ENCODE measurements at regions of chr6 and their contacts with region 1.

Region 1: DNA sequence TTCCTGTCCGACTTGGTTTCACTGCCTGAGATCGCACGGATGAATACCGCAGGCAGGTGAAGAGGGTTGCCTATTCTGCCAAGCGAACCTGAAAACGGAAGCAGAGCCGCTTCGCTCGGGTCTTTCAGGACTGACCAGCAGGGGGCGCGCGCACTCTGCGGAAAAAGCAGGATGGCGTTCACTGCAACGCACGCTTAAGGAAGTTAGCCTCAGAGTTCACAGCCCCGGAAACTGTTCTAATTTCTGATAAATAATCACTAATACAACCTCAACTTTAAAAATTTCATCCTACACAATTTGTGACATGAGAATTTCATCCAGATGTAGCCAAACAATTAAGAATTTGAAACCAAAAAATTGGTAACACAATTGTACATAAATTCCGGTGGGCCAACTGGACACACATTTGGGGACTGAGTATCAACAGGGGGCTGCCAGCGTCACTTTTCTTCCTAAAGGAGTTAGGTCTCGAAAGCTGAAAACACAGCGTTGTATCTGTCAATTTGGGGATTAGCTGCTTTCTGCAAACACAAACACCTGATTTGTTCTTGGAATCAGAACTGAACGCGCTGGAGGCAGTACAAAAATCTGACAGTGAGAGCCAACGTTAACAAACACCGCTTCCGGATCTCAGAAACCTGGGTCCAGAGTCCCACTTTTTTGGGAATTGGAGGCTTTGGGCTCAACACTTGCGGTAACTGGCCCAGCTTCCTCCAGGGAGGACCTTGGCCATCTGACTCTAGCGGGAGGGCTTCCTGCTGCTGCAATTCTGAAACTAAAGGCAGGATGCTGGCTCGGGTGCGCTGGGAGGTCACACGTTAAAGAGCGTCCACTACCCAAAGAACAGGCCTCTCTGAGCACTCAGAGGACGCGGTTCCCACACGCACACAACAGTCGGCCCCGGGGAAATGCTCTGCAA is 8.8 kb downstream of the PXDC1 start:
- DNase-seq: peak; percentile 90
- ATAC-seq: peak; percentile 93
- H3K4me3 Mint-ChIP-seq: no peak overlapping the region
- H3K27ac Mint-ChIP-seq: peak overlapping the region; percentile 57
- H3K4me1 Mint-ChIP-seq: peaks cover 13% of the 10 kb centered on the region
- H3K27me3 Mint-ChIP-seq: peaks cover 8% of the 10 kb centered on the region

Region 2: DNA sequence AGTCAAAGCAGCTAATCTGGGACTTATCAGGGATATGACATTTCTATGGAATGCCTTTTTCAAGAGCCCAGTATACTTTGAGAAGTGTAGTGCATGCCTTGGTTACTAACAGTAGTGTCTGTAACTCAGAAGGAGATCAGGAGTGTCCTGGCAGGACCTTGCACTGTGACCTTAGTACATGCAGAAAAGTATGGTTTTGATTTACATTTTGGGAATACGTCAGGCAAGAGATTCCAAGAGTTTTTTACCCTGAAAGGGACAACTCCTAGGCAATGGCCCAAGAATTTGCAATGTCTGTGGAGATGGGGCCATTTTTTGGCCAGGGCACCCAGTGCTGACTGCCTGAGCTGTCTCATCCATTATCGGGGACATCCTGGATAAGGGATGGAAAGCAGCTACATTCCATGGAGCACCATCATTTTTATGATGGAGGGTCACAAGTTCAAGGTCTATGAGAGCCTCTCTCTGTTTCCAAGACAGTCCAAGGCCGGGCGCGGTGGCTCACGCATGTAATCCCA is 186.7 kb after region 1 on chr6:
- CTCF ChIA-PET with region 1: interaction called, 23 read pairs
- POLR2A ChIA-PET with region 1: interaction called, 3 read pairs
- DNase-seq: no peak
- ATAC-seq: no peak
- H3K4me3 Mint-ChIP-seq: no peak overlapping the region
- H3K27ac Mint-ChIP-seq: no peak overlapping the region
- H3K4me1 Mint-ChIP-seq: no peaks in the 10 kb centered on the region
- H3K27me3 Mint-ChIP-seq: peaks cover 5% of the 10 kb centered on the region

Region 3: DNA sequence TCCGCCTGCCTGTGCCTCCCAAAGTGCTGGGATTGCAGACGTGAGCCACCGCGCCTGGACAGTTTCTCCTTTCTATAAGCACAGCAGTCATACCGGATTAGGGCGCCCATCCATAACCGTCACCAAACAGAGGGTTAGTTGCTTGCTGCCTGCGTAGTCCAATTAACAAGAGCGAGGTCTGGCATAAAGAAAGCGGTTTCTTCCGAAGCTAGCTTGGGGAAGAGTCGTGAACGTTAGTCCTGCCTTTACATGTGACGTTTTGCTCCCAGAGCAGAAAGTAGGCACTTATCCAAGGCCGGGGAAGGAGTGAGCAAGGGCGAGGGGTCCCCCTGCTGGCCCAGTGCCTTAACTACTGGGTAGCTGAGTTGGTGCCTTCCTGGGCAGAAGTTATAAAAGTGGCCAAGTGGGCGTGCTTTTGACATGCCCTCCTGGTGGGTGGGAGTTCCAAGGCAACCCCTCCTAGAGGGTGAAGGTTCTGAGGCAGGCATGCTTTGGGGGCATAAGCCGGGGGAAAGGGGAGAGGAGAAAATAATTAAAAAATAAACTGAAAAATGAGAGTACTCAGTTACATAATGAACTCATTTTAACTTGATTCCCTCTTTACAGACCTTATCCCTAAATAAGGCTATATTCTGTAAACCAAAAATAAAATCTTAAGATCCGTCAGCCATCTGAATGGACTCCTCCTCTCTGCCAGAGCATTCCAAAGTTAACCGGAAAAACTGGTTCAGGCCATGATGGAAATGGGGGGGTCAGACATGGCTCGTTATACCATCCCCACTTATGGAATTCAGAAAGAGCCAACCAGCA is 248.2 kb after region 1 on chr6:
- CTCF ChIA-PET with region 1: interaction called, 22 read pairs
- POLR2A ChIA-PET with region 1: no interaction called
- DNase-seq: peak; percentile 77
- ATAC-seq: peak; percentile 95
- H3K4me3 Mint-ChIP-seq: no peak overlapping the region
- H3K27ac Mint-ChIP-seq: no peak overlapping the region
- H3K4me1 Mint-ChIP-seq: peaks cover 12% of the 10 kb centered on the region
- H3K27me3 Mint-ChIP-seq: no peaks in the 10 kb centered on the region

Region 4: DNA sequence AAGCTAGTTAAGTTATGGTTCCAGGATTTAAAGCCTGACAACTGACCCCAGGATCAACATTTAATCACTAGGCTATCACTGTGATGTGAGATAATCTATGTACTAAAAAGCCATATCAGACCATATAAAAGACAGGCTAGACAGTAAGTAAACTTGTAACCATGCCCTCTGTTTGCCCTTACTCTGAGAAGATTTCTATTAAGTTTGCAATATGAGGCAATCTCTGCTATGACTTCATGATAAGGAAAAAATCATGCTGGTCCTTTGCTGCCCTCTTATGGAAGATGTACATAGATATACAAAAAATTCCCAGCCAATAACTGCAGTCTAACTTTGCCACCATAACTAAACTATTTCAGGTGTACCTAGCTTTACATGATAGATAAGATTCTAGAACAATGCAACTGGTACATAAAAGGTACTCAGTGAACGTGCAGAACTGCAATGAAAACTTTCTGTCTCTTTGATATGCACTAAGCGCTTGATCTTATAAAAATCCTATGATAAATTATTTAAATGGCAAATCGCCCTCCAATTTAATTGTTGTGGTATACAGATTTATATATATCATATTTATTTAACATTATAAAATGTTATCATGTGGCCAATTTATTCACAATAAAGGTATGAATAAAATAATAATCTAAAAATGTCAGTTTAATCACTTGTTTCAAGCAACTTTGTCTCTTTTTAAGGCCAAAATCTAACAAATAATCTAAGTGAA is 265.8 kb after region 1 on chr6:
- CTCF ChIA-PET with region 1: interaction called, 10 read pairs
- POLR2A ChIA-PET with region 1: no interaction called
- DNase-seq: no peak
- ATAC-seq: peak; percentile 63
- H3K4me3 Mint-ChIP-seq: no peak overlapping the region
- H3K27ac Mint-ChIP-seq: peak overlapping the region; percentile 25
- H3K4me1 Mint-ChIP-seq: peaks cover 46% of the 10 kb centered on the region
- H3K27me3 Mint-ChIP-seq: no peaks in the 10 kb centered on the region

Measured in activated CD8-positive, alpha-beta T cell treated with anti-CD3 and anti-CD28 coated beads, Interleukin-2, amount 10 ng/mL, durations not matched to agents 7 days and 5 days (primary cell).